PC-9 (cell line): ENCODE measurements at regions of chr17 and their contacts with region 1.

Region 1: DNA sequence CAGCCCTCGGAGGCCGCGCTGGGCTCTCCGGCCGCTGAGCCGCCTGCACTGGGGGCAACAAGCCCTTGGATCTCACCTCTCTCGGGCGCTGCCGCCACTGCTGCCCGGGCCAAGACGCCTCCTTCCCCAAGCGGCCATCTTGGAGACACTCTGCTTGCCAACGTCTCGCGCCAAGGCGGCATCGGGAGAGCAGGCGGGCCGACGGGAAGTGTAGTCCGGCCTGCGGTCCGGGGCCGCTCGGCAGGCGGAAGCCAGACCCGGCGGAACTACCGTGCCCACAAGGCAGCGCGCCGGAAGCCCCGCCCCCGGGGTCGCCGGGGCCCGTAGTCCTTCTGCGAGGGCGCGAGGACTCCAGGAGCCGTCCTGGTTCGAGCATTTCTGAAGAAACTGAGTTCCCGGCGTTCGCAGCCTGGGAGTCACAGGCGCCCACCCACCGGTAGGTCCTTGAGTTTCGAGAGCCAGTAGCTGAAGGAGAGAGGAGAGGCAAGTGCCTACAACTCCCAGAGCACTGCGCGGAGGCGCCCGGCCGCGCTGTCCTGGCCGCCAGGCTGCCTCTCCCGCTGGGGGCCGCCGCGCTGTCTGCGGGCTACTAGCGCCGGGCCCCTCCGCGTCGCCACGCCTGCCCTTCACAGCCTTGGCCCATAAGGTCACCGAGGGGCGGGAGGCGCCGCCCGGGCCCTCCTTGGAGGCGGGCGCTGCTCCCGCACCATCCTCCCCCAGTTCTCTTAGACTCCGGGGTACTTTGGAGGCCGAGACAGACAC is at the start of gene TMEM11:
- DNase-seq: peak; percentile 86 to 97
- H3K4me3 ChIP-seq: peak within 1 kb of the TSS; percentile 97
- H3K27ac ChIP-seq: peak within 1 kb of the TSS; percentile 81
- H3K4me1 ChIP-seq: peaks cover 32% of the 10 kb centered on the region
- H3K27me3 ChIP-seq: no peaks in the 10 kb centered on the region
- CTCF ChIP-seq: no peak
- total RNA-seq, gene TMEM11: 34.2 and 37.6 TPM in 2 replicates

Region 2: DNA sequence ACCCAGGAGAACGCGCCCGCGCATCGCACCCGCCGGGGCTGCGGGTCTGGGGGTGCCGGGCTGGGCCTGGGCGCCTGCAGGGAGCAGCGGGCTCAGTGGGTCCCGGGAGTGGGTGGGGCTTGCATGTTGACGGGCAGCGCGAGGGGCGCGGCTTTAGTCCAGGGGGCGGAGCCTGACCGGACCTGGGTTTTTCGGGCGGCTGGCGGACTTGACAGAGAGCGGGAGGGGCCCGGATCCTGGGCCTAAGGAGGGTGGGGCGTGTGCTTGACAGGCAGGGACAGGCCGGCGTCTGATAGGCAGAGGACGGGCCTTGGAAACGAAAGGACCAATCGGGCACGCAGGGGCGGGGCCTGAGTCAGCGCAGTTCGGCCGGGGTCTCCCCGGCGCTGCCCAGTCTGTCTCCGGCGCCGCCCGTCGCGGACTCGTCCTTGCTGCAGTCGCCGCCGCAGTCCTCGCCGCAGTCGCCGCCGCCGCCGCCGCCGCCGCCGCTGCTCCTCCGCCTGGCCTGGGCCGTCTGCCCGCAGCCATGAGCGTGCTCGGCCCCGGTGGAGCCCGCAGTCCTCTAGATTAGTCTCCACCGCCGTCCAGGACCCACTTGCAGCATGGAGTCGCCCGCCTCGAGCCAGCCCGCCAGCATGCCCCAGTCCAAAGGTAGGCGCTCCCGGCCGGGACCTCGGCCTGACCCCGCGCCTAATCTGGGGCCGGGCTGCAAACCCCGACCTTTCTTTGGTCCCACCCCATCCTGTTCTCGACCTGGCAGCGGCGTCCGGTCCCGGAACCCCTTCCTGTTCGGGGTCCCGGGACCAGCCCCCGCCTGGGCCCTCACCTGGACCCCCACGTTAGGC is 70.3 kb after region 1 on chr17 and contains the start of gene MAP2K3:
- CTCF ChIA-PET with region 1: no interaction called
- POLR2A ChIA-PET with region 1: interaction called, 5 read pairs
- intact Hi-C with region 1: loop called (anchors 1 kb)
- DNase-seq: peak; percentile 96 to 100
- H3K4me3 ChIP-seq: peak within 1 kb of the TSS; percentile 76
- H3K27ac ChIP-seq: peak within 1 kb of the TSS; percentile 96
- H3K4me1 ChIP-seq: peaks cover 46% of the 10 kb centered on the region
- H3K27me3 ChIP-seq: no peaks in the 10 kb centered on the region
- CTCF ChIP-seq: no peak
- total RNA-seq, gene MAP2K3: 89.2 and 98.1 TPM in 2 replicates

Region 3: GRCh38 chr17:21397341-21398190 is 183.4 kb after region 1 on chr17:
- CTCF ChIA-PET with region 1: no interaction called
- POLR2A ChIA-PET with region 1: no interaction called
- intact Hi-C with region 1: loop called (anchors 10 kb)
- DNase-seq: no peak
- H3K4me3 ChIP-seq: no peak overlapping the region
- H3K27ac ChIP-seq: no peak overlapping the region
- H3K4me1 ChIP-seq: peaks cover 19% of the 10 kb centered on the region
- H3K27me3 ChIP-seq: no peaks in the 10 kb centered on the region
- CTCF ChIP-seq: no peak

Region 4: GRCh38 chr17:21524211-21524591 is 310.0 kb after region 1 on chr17:
- CTCF ChIA-PET with region 1: no interaction called
- POLR2A ChIA-PET with region 1: no interaction called
- intact Hi-C with region 1: no loop called
- DNase-seq: no peak
- H3K4me3 ChIP-seq: no peak overlapping the region
- H3K27ac ChIP-seq: no peak overlapping the region
- H3K4me1 ChIP-seq: no peaks in the 10 kb centered on the region
- H3K27me3 ChIP-seq: no peaks in the 10 kb centered on the region; the same call in 1 of the 2 replicates
- CTCF ChIP-seq: no peak